Activated B cell treated with CpG ODN at 0.5 μM for 24 hours (primary cell): ENCODE measurements at regions of chr7 and their contacts with region 1.

Region 1: DNA sequence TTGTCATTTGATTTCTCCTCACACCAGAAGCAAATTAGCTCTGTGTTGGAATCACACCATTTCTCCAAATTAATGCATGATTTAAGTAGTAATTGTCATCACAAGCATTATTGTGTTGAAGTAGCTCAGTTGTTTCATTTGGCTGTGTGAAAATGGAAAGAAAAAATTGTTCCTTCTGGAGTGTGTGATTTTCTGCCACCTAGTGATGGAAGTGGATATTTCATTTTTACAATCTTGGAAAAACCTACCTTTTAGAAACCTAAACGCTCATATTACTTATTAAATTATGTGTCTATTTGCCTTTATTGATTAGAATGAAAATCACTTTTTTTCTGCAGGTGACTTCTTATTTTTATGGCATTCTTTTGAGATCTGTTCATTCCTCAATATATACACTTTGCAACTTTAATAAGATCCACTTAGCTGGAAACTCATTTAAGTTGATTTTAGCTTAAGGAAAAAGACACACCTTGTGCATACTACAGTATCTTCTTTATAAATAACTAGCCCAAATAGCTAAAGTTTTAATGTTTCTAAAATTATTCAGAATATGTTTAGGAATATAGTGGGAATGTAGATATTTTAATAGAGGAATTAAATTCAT is 50.0 kb downstream of the SRI start:
- DNase-seq: no peak
- ATAC-seq: no peak
- H3K4me3 Mint-ChIP-seq: no peak overlapping the region
- H3K27ac Mint-ChIP-seq: no peak overlapping the region
- H3K4me1 Mint-ChIP-seq: no peaks in the 10 kb centered on the region
- H3K27me3 Mint-ChIP-seq: no peaks in the 10 kb centered on the region
- CTCF ChIP-seq: peak; percentile 17

Region 2: DNA sequence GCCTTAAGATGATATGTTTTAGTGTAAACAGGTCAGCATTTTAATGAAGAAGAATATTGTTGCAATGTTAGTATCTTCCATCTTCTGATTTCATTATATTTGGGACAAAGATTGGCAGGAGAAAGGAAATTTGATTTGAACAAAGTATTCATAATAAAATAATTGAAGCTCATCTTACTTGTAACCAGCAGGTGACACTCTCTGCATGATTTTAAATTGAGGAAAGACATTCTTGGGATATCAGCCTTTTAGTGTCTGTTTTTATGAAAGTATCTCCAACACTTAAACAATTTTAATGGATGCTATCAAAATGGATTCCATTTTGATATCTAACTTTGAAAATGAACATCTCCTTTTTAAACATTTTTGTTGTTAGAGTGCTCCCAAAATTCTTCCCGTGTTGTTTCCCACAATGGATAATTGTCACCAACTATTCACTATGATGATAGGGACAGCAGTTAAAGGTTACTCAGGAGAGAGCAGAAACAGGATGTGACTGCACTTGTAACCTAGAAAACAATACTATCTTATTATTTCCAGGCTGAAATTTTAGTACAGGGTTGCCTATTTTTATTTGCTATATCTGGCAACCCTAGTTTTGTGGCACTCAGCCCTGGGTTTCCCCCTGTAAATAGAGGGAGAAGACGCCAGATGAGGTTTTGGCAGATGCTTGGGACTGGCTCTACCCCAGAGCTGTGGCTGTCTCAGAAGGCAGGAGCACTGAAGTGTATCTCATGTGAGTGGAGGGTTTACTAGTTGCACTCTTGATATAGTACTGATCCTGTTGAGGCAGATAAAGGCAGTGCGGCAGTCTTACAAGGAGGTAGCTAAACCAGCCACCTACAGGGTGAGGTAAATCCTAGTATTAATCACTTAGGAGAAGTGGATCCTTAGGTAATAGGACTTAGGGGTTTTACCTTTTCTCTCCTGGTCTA is 663.3 kb before region 1 on chr7:
- CTCF ChIA-PET with region 1: interaction called, 5 read pairs
- POLR2A ChIA-PET with region 1: no interaction called
- intact Hi-C with region 1: loop called (anchors 2 kb)
- DNase-seq: no peak
- ATAC-seq: no peak
- H3K4me3 Mint-ChIP-seq: no peak overlapping the region
- H3K27ac Mint-ChIP-seq: peak overlapping the region; percentile 30
- H3K4me1 Mint-ChIP-seq: peaks cover 29% of the 10 kb centered on the region
- H3K27me3 Mint-ChIP-seq: no peaks in the 10 kb centered on the region
- CTCF ChIP-seq: no peak